Natural killer cell (primary cell): ENCODE measurements at regions of chr5 and their contacts with region 1.

Region 1: GRCh38 chr5:128201065-128201926 is 117.7 kb downstream of the SLC12A2 start:
- DNase-seq: peak; percentile 73 to 84
- ATAC-seq: peak; percentile 88 to 99 (median 98)
- H3K4me3 ChIP-seq: no peak overlapping the region
- H3K4me3 Mint-ChIP-seq: no peak overlapping the region
- H3K27ac ChIP-seq: no peak overlapping the region
- H3K27ac Mint-ChIP-seq: no peak overlapping the region
- H3K4me1 ChIP-seq: peaks cover 3% of the 10 kb centered on the region
- H3K4me1 Mint-ChIP-seq: peaks cover 6 to 9% of the 10 kb centered on the region in 2 donors
- H3K27me3 ChIP-seq: no peaks in the 10 kb centered on the region
- H3K27me3 Mint-ChIP-seq: peaks cover 2 to 8% of the 10 kb centered on the region in 2 donors
- CTCF ChIP-seq: peak; percentile 91

Region 2: DNA sequence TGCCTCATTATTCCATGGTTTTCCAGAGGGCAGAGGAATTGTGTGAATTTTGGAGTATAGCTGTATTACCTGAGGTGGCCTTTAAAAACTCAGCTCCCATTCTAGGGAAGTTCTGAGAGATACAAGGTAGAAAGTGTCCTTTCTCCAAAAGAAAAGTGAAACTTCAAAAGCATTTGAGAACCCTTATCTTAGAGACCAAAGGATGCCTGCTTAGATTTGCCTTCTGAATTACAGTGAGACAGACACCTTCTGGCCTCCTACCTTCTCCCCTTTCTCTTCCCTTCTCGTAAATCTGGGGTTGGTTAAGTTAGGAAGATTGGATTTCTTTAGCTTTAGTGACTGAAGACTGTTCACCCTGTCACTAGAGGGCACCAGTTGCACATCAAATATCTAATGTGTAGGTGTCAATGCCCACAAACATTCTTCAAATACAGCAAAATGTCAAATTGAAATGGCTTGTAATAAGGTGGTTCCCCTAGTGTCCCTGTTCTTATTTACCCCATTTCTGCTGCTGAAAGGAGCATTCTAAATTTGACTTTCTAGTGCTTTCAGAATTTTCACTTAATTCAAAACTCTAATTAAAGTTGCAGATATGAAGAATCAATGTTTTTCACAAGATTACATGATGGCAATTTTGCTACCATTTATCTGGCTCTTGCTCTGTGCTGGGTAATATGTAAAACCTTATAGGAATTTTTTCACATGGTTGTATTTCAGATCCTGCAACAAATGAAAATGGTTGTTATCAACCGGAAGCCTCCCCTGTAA is 637.1 kb before region 1 on chr5:
- intact Hi-C with region 1: loop called (anchors 1 kb)
- DNase-seq: peak in 1 of 2 donors; percentile 80
- ATAC-seq: peak; percentile 70 to 79 (median 72)
- H3K4me3 ChIP-seq: no peak overlapping the region
- H3K4me3 Mint-ChIP-seq: no peak overlapping the region
- H3K27ac ChIP-seq: no peak overlapping the region
- H3K27ac Mint-ChIP-seq: no peak overlapping the region
- H3K4me1 ChIP-seq: no peaks in the 10 kb centered on the region
- H3K4me1 Mint-ChIP-seq: peaks cover 6 to 10% of the 10 kb centered on the region in 2 donors
- H3K27me3 ChIP-seq: no peaks in the 10 kb centered on the region
- H3K27me3 Mint-ChIP-seq: peaks cover 13 to 21% of the 10 kb centered on the region in 2 donors
- CTCF ChIP-seq: peak; percentile 41

Region 3: GRCh38 chr5:127746756-127747155 is 454.5 kb before region 1 on chr5:
- intact Hi-C with region 1: loop called (anchors 1 kb)
- DNase-seq: peak in 1 of 2 donors; percentile 39
- ATAC-seq: no peak
- H3K4me3 ChIP-seq: no peak overlapping the region
- H3K4me3 Mint-ChIP-seq: no peak overlapping the region
- H3K27ac ChIP-seq: no peak overlapping the region
- H3K27ac Mint-ChIP-seq: no peak overlapping the region
- H3K4me1 ChIP-seq: no peaks in the 10 kb centered on the region
- H3K4me1 Mint-ChIP-seq: no peaks in the 10 kb centered on the region
- H3K27me3 ChIP-seq: no peaks in the 10 kb centered on the region
- H3K27me3 Mint-ChIP-seq: peaks cover 0 to 2% of the 10 kb centered on the region in 2 donors
- CTCF ChIP-seq: no peak

Region 4: DNA sequence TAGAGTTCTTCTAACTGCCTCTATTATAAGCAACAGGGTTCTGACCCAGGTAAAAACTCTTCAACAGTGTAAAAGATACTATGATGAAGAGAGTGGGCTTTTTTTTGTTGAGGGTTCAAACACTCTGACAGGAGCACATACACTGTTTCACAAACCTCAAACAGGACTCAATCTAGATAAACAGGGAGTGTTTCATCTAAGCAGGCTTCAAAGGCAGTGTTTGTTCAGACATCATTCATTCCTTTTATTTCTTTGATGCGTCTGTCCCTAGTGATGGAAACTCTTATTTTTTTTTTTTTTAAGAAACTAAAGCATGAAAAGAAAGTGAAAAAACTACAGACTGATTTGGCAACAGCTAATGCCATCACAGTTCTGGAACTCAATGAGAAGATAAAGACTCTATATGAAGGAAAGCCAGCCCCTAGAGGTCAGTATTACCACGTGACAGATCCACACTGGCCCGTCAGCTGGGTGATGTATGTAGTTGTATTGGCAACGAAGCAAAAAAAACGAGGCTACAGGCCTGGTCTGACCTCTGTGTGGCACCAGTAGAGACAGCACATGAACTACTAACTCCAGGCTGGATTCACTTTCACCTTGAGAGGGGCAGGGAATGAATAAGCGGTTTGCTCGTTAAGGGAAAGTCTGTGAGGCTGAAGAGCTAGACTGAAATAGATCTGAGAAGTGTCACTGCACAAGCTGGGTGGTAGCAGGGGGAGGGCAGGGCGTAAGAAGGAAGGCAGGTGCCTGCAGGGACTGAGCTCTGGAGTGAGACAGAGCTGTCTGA is 325.9 kb before region 1 on chr5:
- intact Hi-C with region 1: loop called (anchors 1 kb)
- DNase-seq: peak in 1 of 2 donors; percentile 49
- ATAC-seq: peak; percentile 44 to 67 (median 53)
- H3K4me3 ChIP-seq: no peak overlapping the region
- H3K4me3 Mint-ChIP-seq: no peak overlapping the region
- H3K27ac ChIP-seq: no peak overlapping the region
- H3K27ac Mint-ChIP-seq: no peak overlapping the region
- H3K4me1 ChIP-seq: no peaks in the 10 kb centered on the region
- H3K4me1 Mint-ChIP-seq: no peaks in the 10 kb centered on the region
- H3K27me3 ChIP-seq: no peaks in the 10 kb centered on the region
- H3K27me3 Mint-ChIP-seq: peaks cover 0 to 8% of the 10 kb centered on the region in 2 donors
- CTCF ChIP-seq: no peak

Region 5: DNA sequence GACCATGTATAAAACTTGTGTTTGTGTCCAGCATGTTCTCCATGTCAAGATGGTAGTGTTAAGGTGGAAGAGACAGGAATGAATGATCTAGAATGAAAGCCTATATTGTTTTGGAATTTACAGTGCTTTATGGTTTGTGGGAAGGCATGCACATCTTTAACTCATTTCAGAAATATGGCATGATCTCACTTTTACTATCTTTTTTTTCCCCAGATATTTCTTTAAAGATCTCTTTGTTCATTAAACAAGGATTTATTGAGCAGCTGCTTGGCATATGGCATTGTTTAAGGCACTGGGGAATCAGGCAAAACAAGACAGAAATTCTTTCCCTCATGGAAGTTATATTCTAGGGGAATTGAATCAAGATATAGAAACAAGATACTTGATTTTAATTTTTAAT is 66.0 kb before region 1 on chr5:
- intact Hi-C with region 1: no loop called
- DNase-seq: no peak
- ATAC-seq: no peak
- H3K4me3 ChIP-seq: no peak overlapping the region
- H3K4me3 Mint-ChIP-seq: no peak overlapping the region
- H3K27ac ChIP-seq: no peak overlapping the region
- H3K27ac Mint-ChIP-seq: no peak overlapping the region
- H3K4me1 ChIP-seq: no peaks in the 10 kb centered on the region
- H3K4me1 Mint-ChIP-seq: no peaks in the 10 kb centered on the region
- H3K27me3 ChIP-seq: no peaks in the 10 kb centered on the region
- H3K27me3 Mint-ChIP-seq: no peaks in the 10 kb centered on the region
- CTCF ChIP-seq: no peak

Region 6: GRCh38 chr5:128304088-128304487 is 102.8 kb after region 1 on chr5:
- intact Hi-C with region 1: no loop called
- DNase-seq: no peak
- ATAC-seq: no peak
- H3K4me3 ChIP-seq: no peak overlapping the region
- H3K4me3 Mint-ChIP-seq: no peak overlapping the region
- H3K27ac ChIP-seq: no peak overlapping the region
- H3K27ac Mint-ChIP-seq: no peak overlapping the region
- H3K4me1 ChIP-seq: no peaks in the 10 kb centered on the region
- H3K4me1 Mint-ChIP-seq: no peaks in the 10 kb centered on the region
- H3K27me3 ChIP-seq: no peaks in the 10 kb centered on the region
- H3K27me3 Mint-ChIP-seq: no peaks in the 10 kb centered on the region
- CTCF ChIP-seq: no peak

Region 7: DNA sequence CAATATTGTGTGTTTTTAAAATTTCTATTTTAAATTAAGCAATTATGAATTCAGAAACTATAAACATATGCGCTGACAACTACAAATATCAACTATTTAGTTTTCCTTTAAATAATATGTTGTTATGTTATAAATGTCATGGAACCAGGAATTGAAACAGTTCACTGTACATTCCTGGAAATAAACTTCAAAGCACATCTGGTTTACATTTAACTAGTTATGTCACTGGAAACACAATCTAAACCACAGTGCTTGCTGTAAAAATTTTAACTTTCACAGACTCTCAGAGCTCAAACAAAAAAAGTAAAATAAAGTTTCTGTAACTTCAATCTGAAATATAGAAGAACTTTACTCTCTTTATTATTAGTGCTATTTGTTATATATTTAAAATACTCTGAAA is 157.5 kb after region 1 on chr5:
- intact Hi-C with region 1: no loop called
- DNase-seq: no peak
- ATAC-seq: no peak
- H3K4me3 ChIP-seq: no peak overlapping the region
- H3K4me3 Mint-ChIP-seq: no peak overlapping the region
- H3K27ac ChIP-seq: no peak overlapping the region
- H3K27ac Mint-ChIP-seq: no peak overlapping the region
- H3K4me1 ChIP-seq: no peaks in the 10 kb centered on the region
- H3K4me1 Mint-ChIP-seq: no peaks in the 10 kb centered on the region
- H3K27me3 ChIP-seq: no peaks in the 10 kb centered on the region
- H3K27me3 Mint-ChIP-seq: no peaks in the 10 kb centered on the region
- CTCF ChIP-seq: no peak

Region 8: GRCh38 chr5:128422612-128423011 is 221.3 kb after region 1 on chr5:
- intact Hi-C with region 1: no loop called
- DNase-seq: no peak
- ATAC-seq: no peak
- H3K4me3 ChIP-seq: no peak overlapping the region
- H3K4me3 Mint-ChIP-seq: no peak overlapping the region
- H3K27ac ChIP-seq: no peak overlapping the region
- H3K27ac Mint-ChIP-seq: no peak overlapping the region
- H3K4me1 ChIP-seq: no peaks in the 10 kb centered on the region
- H3K4me1 Mint-ChIP-seq: no peaks in the 10 kb centered on the region
- H3K27me3 ChIP-seq: no peaks in the 10 kb centered on the region
- H3K27me3 Mint-ChIP-seq: no peaks in the 10 kb centered on the region
- CTCF ChIP-seq: no peak